AG04450 (cell line): ENCODE measurements at regions of chr17 and their contacts with region 1.

Region 1: DNA sequence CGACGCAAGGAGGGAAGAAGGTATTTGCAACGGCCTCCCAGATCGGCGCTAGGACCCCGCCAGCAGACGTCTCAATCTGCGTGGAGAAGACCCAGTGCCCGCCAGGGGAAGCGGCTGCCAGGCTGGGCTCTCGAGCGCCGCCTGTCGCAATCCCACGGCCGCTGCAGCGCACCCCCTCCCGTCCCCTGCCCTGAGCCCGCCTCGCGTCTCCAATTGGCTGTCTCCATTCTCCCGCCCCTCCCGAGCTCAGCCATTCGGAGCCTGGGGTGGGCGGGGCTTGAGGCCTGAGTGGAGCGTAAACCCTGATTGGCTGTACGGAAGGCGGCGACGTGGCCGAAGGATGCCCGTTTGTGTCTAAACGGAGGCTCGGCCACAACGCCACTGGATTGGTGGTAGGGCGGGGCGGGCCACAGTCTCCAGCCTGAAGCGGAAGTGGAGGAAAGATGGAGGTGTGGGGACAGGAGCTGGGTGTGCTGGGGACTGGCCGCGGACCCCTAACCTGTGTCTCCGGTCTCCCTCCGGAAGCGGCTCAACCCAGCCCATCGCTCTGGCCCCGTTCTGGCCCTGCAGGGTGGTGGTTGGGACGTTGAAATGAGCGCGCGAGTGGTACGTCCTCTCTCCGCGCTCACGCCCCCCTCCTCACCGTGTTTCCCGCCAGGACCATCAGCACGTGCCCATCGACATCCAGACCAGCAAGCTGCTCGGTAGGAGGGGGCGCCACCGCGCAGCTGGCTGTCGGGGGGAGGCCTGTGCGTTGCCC is at the start of gene CDK5RAP3:
- DNase-seq: peak; percentile 97
- H3K4me3 ChIP-seq: peak within 1 kb of the TSS; percentile 95
- H3K27ac ChIP-seq: peak within 1 kb of the TSS; percentile 78
- H3K27me3 ChIP-seq: no peaks in the 10 kb centered on the region
- CTCF ChIP-seq: peak; percentile 94
- polyA plus RNA-seq, gene CDK5RAP3: 71.2 and 79.7 TPM in 2 replicates

Region 2: DNA sequence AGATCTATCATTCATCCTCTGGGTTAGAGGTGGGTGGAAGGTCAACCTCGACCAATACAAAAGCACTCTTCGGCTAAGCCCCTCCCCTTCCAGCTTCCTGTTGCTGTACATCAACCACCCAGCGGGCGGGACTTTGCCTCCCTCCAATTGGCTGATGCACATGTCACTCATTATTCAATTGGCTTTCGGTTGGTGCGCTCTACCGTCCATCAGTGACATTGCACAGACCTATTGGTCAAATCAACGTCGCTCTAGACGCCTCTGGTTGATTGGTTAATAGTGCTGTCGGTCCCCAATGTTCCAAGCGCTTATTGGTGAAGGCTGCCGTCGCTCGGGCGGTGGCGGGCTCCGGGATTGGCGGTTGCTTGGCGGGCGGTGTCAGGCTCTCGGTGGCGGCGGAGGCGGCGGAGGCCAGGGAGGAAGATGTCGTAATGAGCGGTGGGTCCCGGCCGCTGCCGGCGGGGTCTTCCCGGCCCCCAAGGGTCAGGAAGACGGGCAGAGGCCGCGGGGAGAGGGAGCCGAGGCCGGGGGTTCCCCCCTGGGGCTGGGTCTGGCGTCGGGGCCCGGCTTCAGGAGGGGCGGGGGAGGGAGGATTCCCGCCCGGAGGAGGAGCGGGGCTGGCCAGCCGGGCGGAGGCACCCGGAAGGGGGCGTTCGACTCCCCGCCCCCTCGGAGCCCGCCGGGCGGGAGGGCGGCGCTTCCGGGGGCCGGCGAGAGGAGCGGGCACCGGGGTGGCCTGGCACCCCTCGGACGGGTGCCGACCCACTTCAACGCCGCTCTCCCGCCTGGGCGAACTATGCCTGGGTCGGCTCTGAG is 74.8 kb before region 1 on chr17 and contains the start of gene SP2:
- CTCF ChIA-PET with region 1: interaction called, 4 read pairs
- POLR2A ChIA-PET with region 1: interaction called, 12 read pairs
- DNase-seq: peak; percentile 100
- H3K4me3 ChIP-seq: peak within 1 kb of the TSS; percentile 95
- H3K27ac ChIP-seq: peak within 1 kb of the TSS; percentile 87
- H3K27me3 ChIP-seq: no peaks in the 10 kb centered on the region
- CTCF ChIP-seq: no peak
- polyA plus RNA-seq, gene SP2: 2.7 and 3.9 TPM in 2 replicates

Region 3: GRCh38 chr17:47957591-47958428 is 13.1 kb before region 1 on chr17 and contains the start of gene PRR15L:
- CTCF ChIA-PET with region 1: interaction called, 32 read pairs
- POLR2A ChIA-PET with region 1: interaction called, 5 read pairs
- DNase-seq: no peak
- H3K4me3 ChIP-seq: no peak within 1 kb of the TSS
- H3K27ac ChIP-seq: no peak within 1 kb of the TSS
- H3K27me3 ChIP-seq: peaks cover 9% of the 10 kb centered on the region
- CTCF ChIP-seq: no peak
- polyA plus RNA-seq, gene PRR15L: not detected in 2 replicates

Region 4: GRCh38 chr17:48002266-48002915 is 31.5 kb after region 1 on chr17:
- CTCF ChIA-PET with region 1: interaction called, 10 read pairs
- POLR2A ChIA-PET with region 1: interaction called, 9 read pairs
- DNase-seq: peak; percentile 47
- H3K4me3 ChIP-seq: no peak overlapping the region
- H3K27ac ChIP-seq: peak overlapping the region; percentile 89
- H3K27me3 ChIP-seq: no peaks in the 10 kb centered on the region
- CTCF ChIP-seq: no peak

Region 5: GRCh38 chr17:48543107-48543853 is 572.4 kb after region 1 on chr17:
- CTCF ChIA-PET with region 1: no interaction called
- POLR2A ChIA-PET with region 1: no interaction called
- DNase-seq: no peak
- H3K4me3 ChIP-seq: peak overlapping the region; percentile 87
- H3K27ac ChIP-seq: peak overlapping the region; percentile 97
- H3K27me3 ChIP-seq: no peaks in the 10 kb centered on the region
- CTCF ChIP-seq: no peak